ENCODE measurements at regions of chr13 and their contacts with region 1.

Region 1: DNA sequence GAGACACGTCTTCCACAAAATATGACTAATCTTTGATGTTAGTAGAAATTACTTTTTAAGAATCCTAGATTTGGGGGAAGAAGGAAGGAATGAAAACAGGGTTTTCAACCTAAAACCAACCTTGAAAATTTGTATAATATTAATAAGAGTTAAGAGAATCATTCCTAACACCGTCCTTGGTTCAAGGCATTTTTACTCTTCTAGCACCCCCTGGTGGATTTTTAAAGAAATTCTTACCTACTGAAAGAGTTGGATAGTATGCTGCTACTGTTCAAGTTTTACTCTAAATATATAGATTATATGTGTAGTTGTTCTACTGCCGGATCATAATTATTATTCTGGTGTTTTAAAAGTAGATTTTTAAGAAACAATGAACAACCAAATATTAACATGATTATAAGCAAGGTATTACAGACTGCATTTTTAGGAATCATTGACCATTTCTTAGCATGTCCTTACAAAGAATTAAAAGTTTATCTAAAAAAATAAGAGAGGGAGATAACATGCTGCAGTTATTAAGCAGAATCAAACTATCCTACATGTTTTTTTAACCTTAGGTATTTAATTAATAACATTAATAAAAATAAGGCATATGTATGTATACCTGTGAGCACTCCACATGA is 7.4 kb upstream of the SLITRK6 start:
- DNase-seq: peak; percentile 37
- H3K4me3 ChIP-seq: no peak overlapping the region
- H3K27ac ChIP-seq: no peak overlapping the region
- H3K4me1 ChIP-seq: no peaks in the 10 kb centered on the region
- H3K27me3 ChIP-seq: no peaks in the 10 kb centered on the region
- CTCF ChIP-seq: peak in 1 of 2 donors; percentile 21
- POLR2A ChIP-seq: no peak

Region 2: GRCh38 chr13:84896128-84896527 is 910.5 kb before region 1 on chr13:
- CTCF ChIA-PET with region 1: interaction called, 14 read pairs
- POLR2A ChIA-PET with region 1: no interaction called
- dilution Hi-C with region 1: no loop called
- intact Hi-C with region 1: loop called (anchors 1 kb)
- DNase-seq: peak; percentile 46
- H3K4me3 ChIP-seq: no peak overlapping the region
- H3K27ac ChIP-seq: no peak overlapping the region
- H3K4me1 ChIP-seq: no peaks in the 10 kb centered on the region
- H3K27me3 ChIP-seq: no peaks in the 10 kb centered on the region
- CTCF ChIP-seq: peak; percentile 30 to 38
- POLR2A ChIP-seq: no peak

Region 3: DNA sequence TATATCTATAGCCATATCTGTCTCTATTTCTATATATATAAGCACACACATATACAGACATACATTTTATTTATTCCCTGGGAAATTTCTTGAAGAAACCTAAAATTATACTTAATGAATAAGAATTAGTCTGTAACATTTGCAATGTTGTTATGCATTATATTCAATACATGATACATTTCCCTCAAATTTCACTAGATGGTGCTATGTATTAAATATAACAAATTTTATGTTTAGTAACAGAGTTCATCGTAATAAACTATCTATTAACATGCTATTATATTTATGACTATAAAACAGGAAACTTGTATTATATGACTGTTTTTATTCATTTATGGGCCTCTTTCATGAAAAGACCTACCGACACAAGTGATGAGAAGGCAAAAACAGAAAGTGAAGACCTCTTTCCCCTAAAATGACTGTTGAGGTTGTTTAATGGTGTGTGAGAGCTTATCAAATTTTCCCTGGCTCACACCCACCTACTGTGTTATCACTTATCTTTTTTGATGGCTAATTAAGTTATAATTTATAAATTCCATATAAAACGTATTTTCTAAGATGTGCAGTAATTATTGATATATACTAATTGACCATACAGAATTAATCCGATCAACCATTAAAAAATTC is 889.3 kb before region 1 on chr13:
- CTCF ChIA-PET with region 1: no interaction called
- POLR2A ChIA-PET with region 1: no interaction called
- dilution Hi-C with region 1: no loop called
- intact Hi-C with region 1: loop called (anchors 1 kb)
- DNase-seq: peak; percentile 16
- H3K4me3 ChIP-seq: no peak overlapping the region
- H3K27ac ChIP-seq: no peak overlapping the region
- H3K4me1 ChIP-seq: no peaks in the 10 kb centered on the region
- H3K27me3 ChIP-seq: no peaks in the 10 kb centered on the region
- CTCF ChIP-seq: no peak
- POLR2A ChIP-seq: no peak

Measured in endothelial cell of umbilical vein (primary cell).